ENCODE measurements at regions of chr19 and their contacts with region 1.

Region 1: DNA sequence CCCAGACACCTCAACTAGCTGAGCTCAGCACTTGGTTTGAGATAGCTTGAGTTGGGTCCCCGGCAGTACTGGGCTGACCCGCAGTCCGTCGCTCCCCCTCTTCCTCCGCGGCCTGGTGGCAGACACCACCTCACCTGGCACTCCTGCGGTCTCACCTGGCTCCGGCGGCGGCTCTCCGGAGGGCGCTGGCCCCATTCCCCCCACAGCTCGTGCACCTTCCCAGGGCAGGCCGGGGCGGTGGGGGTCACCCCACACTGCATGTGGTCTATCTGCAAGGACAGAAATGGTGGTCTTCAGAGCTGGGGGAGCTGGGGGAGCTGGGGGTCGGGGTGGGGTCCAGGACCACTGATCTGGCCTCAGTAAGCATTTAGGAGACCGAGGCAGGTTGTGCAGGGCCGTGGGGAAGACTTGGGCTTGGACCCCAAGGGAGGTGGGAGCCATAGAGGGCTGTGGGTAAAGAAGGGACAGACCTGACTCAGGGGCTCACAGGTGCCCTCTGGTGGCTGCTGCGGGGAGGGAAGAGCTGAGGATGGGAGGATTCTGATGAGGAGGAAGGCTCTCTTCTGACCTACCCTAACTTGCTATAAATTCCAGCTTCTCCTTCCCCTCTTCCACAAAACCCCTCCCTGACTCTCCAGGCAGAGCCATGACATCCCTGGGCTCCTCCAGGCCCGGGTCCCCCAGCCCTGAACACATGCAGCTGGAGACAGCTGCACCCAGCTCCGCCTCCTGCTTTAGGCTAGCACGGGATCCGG is 6.7 kb upstream of the PLIN4 start:
- DNase-seq: peak in 4 of 5 donors; percentile 43 to 71 (median 54)
- ATAC-seq: peak in 3 of 4 donors; percentile 46 to 60 (median 58)
- H3K4me3 ChIP-seq: peak overlapping the region in 1 of 12 donors; percentile 15
- H3K27ac ChIP-seq: no peak overlapping the region
- H3K4me1 ChIP-seq: peaks cover 0 to 5% (median under 1%) of the 10 kb centered on the region in 12 donors
- H3K27me3 ChIP-seq: no peaks in the 10 kb centered on the region
- CTCF ChIP-seq: peak; percentile 61 to 79 (median 72)
- POLR2A ChIP-seq: no peak

Region 2: DNA sequence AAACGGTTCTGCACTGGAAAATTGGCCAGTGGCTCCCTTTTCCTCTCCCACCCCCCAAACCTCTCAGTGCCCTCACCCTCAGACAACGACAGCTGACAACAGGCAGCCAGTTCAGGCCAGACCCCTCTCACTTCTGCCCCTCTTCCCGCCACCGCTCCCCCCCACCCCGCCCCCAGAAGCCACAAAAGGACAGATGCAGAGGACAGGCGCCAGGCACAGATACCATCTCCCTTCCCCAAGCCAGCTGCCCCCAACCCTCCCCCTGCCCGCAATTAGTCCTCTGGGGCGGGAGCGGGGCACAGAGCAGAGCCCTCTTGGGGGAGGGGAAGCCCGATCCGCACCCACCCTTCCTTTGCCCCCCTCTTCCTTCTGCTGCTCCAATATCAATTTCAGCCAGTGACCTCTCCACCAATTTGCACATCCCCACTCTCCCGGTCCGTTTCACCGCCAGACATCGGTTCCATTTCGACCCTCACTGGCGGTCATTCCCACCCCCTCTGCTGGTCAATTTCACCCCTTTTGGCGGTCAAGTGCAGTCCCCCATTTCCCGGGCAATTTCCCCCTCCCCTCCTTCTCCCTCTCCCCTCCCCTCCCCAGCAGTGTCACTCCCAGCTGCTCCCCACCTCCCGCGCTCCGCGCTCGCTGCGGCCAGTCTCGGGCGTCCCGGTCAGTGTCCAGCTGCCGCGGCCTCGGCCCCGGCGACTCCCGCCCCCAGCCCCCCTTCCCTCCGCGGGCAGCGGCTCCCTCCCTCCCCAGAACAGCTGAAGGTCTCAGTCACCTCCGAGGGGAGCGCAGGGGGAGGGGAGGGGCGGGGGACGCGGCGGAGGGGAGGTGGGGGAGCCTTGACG is 246.3 kb before region 1 on chr19 and contains the start of gene SHD:
- intact Hi-C with region 1: loop called in 2 of 10 experiments (anchors 10 kb)
- DNase-seq: no peak
- ATAC-seq: no peak
- H3K4me3 ChIP-seq: peak within 1 kb of the TSS; percentile 5 to 51 (median 38)
- H3K27ac ChIP-seq: no peak within 1 kb of the TSS
- H3K4me1 ChIP-seq: peaks cover 0 to 22% (median 9%) of the 10 kb centered on the region in 12 donors
- H3K27me3 ChIP-seq: peaks cover 14 to 54% (median 33%) of the 10 kb centered on the region in 9 donors
- CTCF ChIP-seq: no peak
- POLR2A ChIP-seq: no peak
- total RNA-seq, gene SHD: 0.52 TPM in 1 of 9 donors, not detected in the others

Region 3: GRCh38 chr19:4933528-4933927 is 408.5 kb after region 1 on chr19:
- intact Hi-C with region 1: no loop called
- DNase-seq: no peak
- ATAC-seq: no peak
- H3K4me3 ChIP-seq: no peak overlapping the region
- H3K27ac ChIP-seq: no peak overlapping the region
- H3K4me1 ChIP-seq: no peaks in the 10 kb centered on the region
- H3K27me3 ChIP-seq: no peaks in the 10 kb centered on the region
- CTCF ChIP-seq: no peak
- POLR2A ChIP-seq: no peak

Measured in heart left ventricle (tissue), 16 donors.